IMR-90 (cell line): ENCODE measurements at regions of chr6 and their contacts with region 1.

Region 1: GRCh38 chr6:36885461-36886401 is at the start of gene C6orf89:
- DNase-seq: peak; percentile 96
- ATAC-seq: peak; percentile 100
- H3K4me3 ChIP-seq: peak within 1 kb of the TSS; percentile 80
- H3K27ac ChIP-seq: peak within 1 kb of the TSS; percentile 74
- H3K4me1 ChIP-seq: no peaks in the 10 kb centered on the region; the same call in 1 of the 2 replicates
- H3K27me3 ChIP-seq: no peaks in the 10 kb centered on the region
- CTCF ChIP-seq: peak; percentile 88
- POLR2A ChIP-seq: peak; percentile 56; the same call in 1 of the 2 replicates
- RAD21 ChIP-seq: peak; percentile 62
- total RNA-seq, gene C6orf89: 39.2 and 52.3 TPM in 2 replicates

Region 2: DNA sequence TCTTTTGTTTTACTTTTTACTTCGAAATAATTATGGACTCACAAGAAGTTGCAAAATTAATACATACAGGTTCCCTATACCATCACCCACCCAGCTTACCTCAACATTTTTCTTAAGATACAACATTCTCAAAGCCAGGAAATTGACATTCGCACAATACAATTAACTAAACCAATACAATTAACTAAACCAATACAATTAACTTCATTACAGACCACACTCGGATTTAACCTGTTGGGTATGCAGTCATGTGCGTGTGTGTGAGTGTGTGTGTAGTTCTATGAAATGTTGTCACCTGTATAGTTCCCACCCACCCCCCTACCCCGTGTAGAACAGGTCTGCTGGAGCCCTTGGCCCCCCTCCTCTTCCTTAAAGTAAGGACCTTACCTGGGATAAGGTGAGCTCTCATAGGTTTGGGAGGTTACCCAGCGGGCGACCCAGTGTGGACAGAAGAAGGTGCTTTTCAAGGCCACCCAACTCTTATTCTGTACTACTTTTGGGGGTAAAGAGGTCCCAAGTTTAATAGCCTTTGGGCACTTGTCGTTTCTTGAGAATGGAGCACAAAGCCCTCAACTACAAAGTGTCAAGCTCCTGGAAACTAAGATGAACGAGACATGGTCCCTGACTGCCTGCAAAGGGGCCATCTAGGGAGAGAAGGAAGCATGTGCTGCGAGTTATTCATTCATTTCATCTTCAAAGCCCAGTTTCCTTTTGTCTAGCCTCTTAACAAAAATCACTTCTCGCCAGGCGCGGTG is 337.9 kb before region 1 on chr6:
- CTCF ChIA-PET with region 1: no interaction called
- POLR2A ChIA-PET with region 1: no interaction called
- dilution Hi-C with region 1: no loop called
- in situ Hi-C with region 1: no loop called
- intact Hi-C with region 1: no loop called
- DNase-seq: no peak
- ATAC-seq: no peak
- H3K4me3 ChIP-seq: peak overlapping the region; percentile 97; the same call in 1 of the 2 replicates
- H3K27ac ChIP-seq: no peak overlapping the region
- H3K4me1 ChIP-seq: peaks cover 3% of the 10 kb centered on the region; the same call in 1 of the 2 replicates
- H3K27me3 ChIP-seq: no peaks in the 10 kb centered on the region
- CTCF ChIP-seq: no peak
- POLR2A ChIP-seq: no peak
- RAD21 ChIP-seq: no peak

Region 3: GRCh38 chr6:36793913-36794712 is 91.6 kb before region 1 on chr6:
- CTCF ChIA-PET with region 1: no interaction called
- POLR2A ChIA-PET with region 1: no interaction called
- dilution Hi-C with region 1: no loop called
- in situ Hi-C with region 1: no loop called
- intact Hi-C with region 1: no loop called
- DNase-seq: peak; percentile 12
- ATAC-seq: no peak
- H3K4me3 ChIP-seq: no peak overlapping the region
- H3K27ac ChIP-seq: no peak overlapping the region
- H3K4me1 ChIP-seq: no peaks in the 10 kb centered on the region
- H3K27me3 ChIP-seq: peaks cover 56% of the 10 kb centered on the region
- CTCF ChIP-seq: no peak
- POLR2A ChIP-seq: no peak
- RAD21 ChIP-seq: no peak

Region 4: DNA sequence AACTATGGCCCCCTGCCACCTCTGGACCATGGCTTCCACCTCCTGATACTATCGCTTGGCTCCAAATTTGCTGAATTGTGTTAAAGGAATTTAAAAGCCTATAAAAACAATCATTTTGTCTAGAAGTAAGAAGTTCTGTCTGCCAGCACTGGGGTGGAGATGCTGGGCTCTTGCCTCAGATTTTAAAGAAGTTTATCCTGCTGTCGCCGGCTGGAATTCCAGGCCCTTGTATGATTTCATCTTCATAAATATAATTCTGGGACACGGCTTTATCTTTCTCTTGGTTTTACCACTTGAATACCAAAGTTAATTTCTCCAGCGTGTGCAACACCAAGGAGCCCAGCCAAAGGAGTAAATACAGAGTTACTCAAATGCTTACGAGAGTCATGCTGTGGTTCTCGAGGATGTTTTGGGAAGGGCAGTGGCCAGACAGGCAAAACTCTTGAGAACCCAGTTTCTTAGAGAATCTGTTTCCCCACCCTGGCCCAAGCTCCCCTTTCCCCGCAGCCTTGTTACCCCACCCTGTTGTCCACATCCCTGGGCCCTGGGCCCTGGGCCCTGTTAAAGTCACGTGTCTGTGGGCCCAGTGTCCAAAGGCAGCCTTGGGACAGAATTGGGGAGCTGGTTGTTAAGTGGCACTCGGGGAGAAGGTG is 31.9 kb after region 1 on chr6:
- CTCF ChIA-PET with region 1: no interaction called
- POLR2A ChIA-PET with region 1: no interaction called
- dilution Hi-C with region 1: no loop called
- in situ Hi-C with region 1: no loop called
- intact Hi-C with region 1: no loop called
- DNase-seq: peak; percentile 80
- ATAC-seq: peak; percentile 77
- H3K4me3 ChIP-seq: no peak overlapping the region
- H3K27ac ChIP-seq: peak overlapping the region; percentile 92
- H3K4me1 ChIP-seq: peaks cover 35% of the 10 kb centered on the region
- H3K27me3 ChIP-seq: no peaks in the 10 kb centered on the region
- CTCF ChIP-seq: no peak
- POLR2A ChIP-seq: no peak
- RAD21 ChIP-seq: no peak; the same call in 1 of the 2 replicates

Region 5: DNA sequence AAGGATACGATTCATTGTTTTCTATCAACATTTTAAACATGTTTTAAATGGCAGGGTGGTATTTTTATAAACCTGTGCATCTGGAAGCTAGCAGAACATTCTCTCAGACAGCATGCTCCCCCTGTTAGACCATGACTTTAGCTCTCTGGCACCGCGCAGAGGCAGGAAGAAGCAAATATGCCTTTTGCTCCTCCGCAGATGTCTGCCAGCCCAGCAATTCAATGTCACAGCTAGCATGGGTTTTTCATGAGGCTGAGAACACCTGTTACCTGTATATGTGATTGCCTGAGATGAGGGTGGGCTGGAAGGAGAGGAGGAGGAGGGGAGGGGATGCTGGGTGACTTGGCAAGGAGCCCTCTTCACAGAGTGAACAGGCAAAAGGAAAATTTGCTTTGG is 93.6 kb after region 1 on chr6:
- CTCF ChIA-PET with region 1: interaction called, 3 read pairs
- POLR2A ChIA-PET with region 1: no interaction called
- dilution Hi-C with region 1: no loop called
- in situ Hi-C with region 1: loop called (anchors 10 kb)
- intact Hi-C with region 1: loop called (anchors 1 kb)
- DNase-seq: peak; percentile 41
- ATAC-seq: peak; percentile 56; the same call in 1 of the 2 replicates
- H3K4me3 ChIP-seq: no peak overlapping the region
- H3K27ac ChIP-seq: no peak overlapping the region
- H3K4me1 ChIP-seq: peaks cover 13% of the 10 kb centered on the region
- H3K27me3 ChIP-seq: no peaks in the 10 kb centered on the region
- CTCF ChIP-seq: peak; percentile 40
- POLR2A ChIP-seq: no peak
- RAD21 ChIP-seq: peak; percentile 53

Region 6: DNA sequence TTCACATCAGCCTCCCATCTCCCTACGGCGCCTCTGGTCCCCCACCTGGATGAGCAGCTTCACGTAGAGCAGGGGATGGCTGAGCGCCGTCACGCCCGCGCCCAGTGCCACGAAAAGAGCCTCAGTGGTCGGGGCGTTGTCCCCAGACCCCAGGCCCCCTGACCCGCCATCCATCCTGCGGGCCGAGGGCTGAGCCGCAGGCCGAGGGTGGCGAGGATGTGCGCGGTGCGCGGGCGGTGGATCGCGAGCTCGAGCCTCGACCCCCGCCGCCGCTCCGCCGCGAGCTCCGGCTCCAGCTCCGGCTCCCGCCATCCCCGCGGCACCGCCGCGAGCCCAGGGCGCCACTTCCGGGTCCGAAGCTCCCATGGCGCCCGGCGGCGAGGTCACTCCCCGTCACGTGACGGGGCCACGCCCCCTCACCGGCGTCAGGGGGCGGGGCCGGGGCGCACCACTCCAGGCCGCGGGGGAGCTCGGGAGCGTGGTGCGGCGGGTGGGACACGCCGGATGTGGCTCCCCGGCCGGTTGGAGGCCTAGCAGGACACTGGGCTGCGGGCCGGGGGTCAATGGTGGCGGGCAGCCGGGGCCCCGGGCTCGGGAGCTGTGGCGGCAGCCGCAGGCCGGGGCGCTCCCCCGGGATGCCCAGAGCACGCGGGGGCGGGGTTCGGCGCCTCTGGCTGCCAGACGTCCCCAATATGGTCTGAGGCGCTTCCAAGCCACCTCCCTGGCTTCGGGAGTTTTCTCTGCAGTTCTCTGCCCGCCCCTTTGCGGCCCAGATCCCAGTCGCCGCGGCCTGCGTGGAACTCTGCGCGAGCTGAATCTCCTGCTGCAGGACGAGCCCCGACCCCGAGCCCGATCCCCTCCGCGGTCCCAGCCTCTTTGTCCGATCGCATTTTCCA is 100.3 kb after region 1 on chr6 and contains the start of gene MTCH1:
- CTCF ChIA-PET with region 1: no interaction called
- POLR2A ChIA-PET with region 1: interaction called, 7 read pairs
- dilution Hi-C with region 1: no loop called
- in situ Hi-C with region 1: loop called (anchors 10 kb)
- intact Hi-C with region 1: no loop called
- DNase-seq: peak; percentile 86
- ATAC-seq: peak; percentile 88
- H3K4me3 ChIP-seq: peak within 1 kb of the TSS; percentile 97
- H3K27ac ChIP-seq: peak within 1 kb of the TSS; percentile 98
- H3K4me1 ChIP-seq: peaks cover 15% of the 10 kb centered on the region
- H3K27me3 ChIP-seq: peaks cover 4% of the 10 kb centered on the region; the same call in 1 of the 2 replicates
- CTCF ChIP-seq: no peak
- POLR2A ChIP-seq: peak; percentile 97
- RAD21 ChIP-seq: no peak; the same call in 1 of the 2 replicates
- total RNA-seq, gene MTCH1: 249 and 263 TPM in 2 replicates

Region 7: GRCh38 chr6:37018198-37019064 is 132.7 kb after region 1 on chr6:
- CTCF ChIA-PET with region 1: interaction called, 21 read pairs
- POLR2A ChIA-PET with region 1: no interaction called
- dilution Hi-C with region 1: no loop called
- in situ Hi-C with region 1: no loop called
- intact Hi-C with region 1: loop called (anchors 1 kb)
- DNase-seq: peak; percentile 87
- ATAC-seq: peak; percentile 99
- H3K4me3 ChIP-seq: no peak overlapping the region
- H3K27ac ChIP-seq: no peak overlapping the region
- H3K4me1 ChIP-seq: no peaks in the 10 kb centered on the region; the same call in 1 of the 2 replicates
- H3K27me3 ChIP-seq: no peaks in the 10 kb centered on the region
- CTCF ChIP-seq: peak; percentile 97
- POLR2A ChIP-seq: no peak
- RAD21 ChIP-seq: peak; percentile 96

Region 8: DNA sequence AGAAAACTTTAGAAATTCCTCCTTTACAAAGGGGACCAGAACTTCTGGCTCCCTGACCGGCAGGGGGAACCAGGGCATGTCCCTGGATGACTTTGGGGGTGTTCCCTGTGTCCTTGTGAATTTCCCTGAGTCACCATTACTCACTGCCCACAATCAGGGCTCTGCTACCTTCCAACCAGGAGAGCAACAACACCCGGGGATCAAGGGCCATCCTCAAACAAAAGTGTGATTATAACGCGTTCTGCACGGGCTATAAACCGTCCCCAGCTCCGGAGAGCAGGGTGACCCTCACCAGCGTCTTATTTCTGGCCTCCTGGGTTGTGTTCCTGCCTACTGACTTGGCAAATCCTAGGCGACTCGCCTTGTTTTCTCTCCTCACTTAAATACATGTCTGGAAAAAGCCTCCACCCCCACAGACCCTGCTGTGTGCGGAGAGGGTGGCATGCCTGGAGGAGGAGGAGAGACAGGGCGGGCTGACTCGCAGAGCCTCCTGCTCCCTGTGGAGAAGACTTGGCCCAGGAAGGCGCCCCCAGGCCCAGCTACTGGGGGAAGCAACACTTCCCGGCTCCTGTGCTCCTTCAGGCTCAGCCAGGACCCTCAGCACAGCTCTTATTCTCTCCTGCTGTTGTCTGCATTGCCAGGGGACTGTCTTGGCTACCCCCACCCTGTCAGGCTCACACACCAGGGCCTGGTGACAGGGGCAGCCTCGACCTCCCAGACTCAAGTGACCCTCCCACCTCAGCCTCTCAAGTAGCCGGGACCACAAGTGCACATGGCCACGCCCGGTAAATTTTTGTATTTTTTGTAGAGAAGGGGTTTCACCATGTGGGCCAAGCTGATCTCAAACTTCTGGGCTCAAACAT is 173.8 kb after region 1 on chr6:
- CTCF ChIA-PET with region 1: no interaction called
- POLR2A ChIA-PET with region 1: no interaction called
- dilution Hi-C with region 1: no loop called
- in situ Hi-C with region 1: no loop called
- intact Hi-C with region 1: no loop called
- DNase-seq: peak; percentile 97
- ATAC-seq: peak; percentile 88
- H3K4me3 ChIP-seq: peak overlapping the region; percentile 1; the same call in 1 of the 2 replicates
- H3K27ac ChIP-seq: peak overlapping the region; percentile 81
- H3K4me1 ChIP-seq: peaks cover 12% of the 10 kb centered on the region
- H3K27me3 ChIP-seq: no peaks in the 10 kb centered on the region
- CTCF ChIP-seq: peak; percentile 86
- POLR2A ChIP-seq: peak; percentile 63; the same call in 1 of the 2 replicates
- RAD21 ChIP-seq: peak; percentile 87

Region 9: GRCh38 chr6:37207903-37208456 is 322.2 kb after region 1 on chr6:
- CTCF ChIA-PET with region 1: interaction called, 5 read pairs
- POLR2A ChIA-PET with region 1: no interaction called
- dilution Hi-C with region 1: no loop called
- in situ Hi-C with region 1: loop called (anchors 10 kb)
- intact Hi-C with region 1: loop called (anchors 1 kb)
- DNase-seq: peak; percentile 70
- ATAC-seq: peak; percentile 86
- H3K4me3 ChIP-seq: no peak overlapping the region
- H3K27ac ChIP-seq: no peak overlapping the region
- H3K4me1 ChIP-seq: peaks cover 2% of the 10 kb centered on the region; the same call in 1 of the 2 replicates
- H3K27me3 ChIP-seq: no peaks in the 10 kb centered on the region
- CTCF ChIP-seq: peak; percentile 69
- POLR2A ChIP-seq: no peak
- RAD21 ChIP-seq: peak; percentile 67